ENCODE measurements at regions of chr17 and their contacts with region 1.

Region 1: GRCh38 chr17:7466639-7467341 is 12.6 kb downstream of the ZBTB4 start:
- DNase-seq: peak; percentile 87 to 90 (median 88)
- ATAC-seq: peak; percentile 43 to 69
- H3K4me3 ChIP-seq: no peak overlapping the region
- H3K27ac ChIP-seq: peak overlapping the region; percentile 83
- H3K4me1 ChIP-seq: peaks cover 10% of the 10 kb centered on the region
- H3K27me3 ChIP-seq: no peaks in the 10 kb centered on the region

Region 2: GRCh38 chr17:7383742-7384488 is 82.9 kb before region 1 on chr17:
- intact Hi-C with region 1: no loop called
- DNase-seq: peak; percentile 61 to 82 (median 81)
- ATAC-seq: peak; percentile 77 to 81
- H3K4me3 ChIP-seq: peak overlapping the region; percentile 16
- H3K27ac ChIP-seq: no peak overlapping the region
- H3K4me1 ChIP-seq: peaks cover 3% of the 10 kb centered on the region
- H3K27me3 ChIP-seq: no peaks in the 10 kb centered on the region

Region 3: DNA sequence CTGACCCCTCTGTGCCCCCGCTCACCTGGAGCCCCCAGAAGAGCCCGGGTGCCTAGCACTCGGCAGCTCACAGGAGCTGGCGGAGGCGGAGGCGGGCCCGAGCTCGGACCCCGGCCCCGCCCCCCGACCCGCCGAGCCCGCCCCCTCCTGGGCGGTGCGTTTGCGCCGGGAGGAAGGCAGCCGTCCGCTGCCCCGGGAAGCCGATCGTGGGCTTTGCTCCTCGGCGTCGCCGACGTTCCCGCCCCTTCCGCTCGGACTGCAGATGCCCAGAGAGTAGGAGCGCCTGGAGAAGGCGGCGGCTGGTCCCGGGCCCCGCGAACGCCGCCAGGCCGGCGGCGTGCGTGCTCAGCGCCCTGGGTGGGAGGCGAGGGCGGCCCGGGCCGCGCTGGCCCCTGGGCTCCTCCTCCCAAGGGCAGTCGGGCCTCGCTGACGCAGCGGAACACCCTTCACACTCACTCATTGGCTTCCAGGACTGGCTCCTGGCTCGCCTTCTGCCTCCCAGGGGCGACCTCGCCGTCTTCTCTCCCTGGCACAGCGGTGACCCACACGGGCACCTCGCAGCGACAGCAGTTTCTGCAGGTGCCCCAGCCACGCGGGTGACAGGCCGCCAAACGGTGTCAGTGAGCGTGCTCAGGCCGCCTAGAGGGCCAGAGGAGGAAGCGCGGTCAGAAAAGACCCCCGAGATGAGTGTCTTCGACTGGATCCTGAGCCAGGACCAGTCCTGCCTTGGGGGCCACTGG is 72.2 kb before region 1 on chr17 and contains the start of gene PLSCR3:
- intact Hi-C with region 1: no loop called
- DNase-seq: peak; percentile 91 to 97 (median 96)
- ATAC-seq: peak; percentile 93 to 95
- H3K4me3 ChIP-seq: peak within 1 kb of the TSS; percentile 92
- H3K27ac ChIP-seq: peak within 1 kb of the TSS; percentile 98
- H3K4me1 ChIP-seq: no peaks in the 10 kb centered on the region
- H3K27me3 ChIP-seq: no peaks in the 10 kb centered on the region
- total RNA-seq, gene PLSCR3: 19.8 to 25.0 (median 22.9) TPM

Region 4: GRCh38 chr17:7444682-7445618 is 21.8 kb before region 1 on chr17 and contains the start of gene CHRNB1:
- intact Hi-C with region 1: loop called in 1 of 4 experiments (anchors 2 kb)
- DNase-seq: peak; percentile 87 to 95 (median 94)
- ATAC-seq: peak; percentile 86 to 88
- H3K4me3 ChIP-seq: peak within 1 kb of the TSS; percentile 45
- H3K27ac ChIP-seq: peak within 1 kb of the TSS; percentile 5
- H3K4me1 ChIP-seq: no peaks in the 10 kb centered on the region
- H3K27me3 ChIP-seq: no peaks in the 10 kb centered on the region
- total RNA-seq, gene CHRNB1: 11.4 to 15.6 (median 13.1) TPM

Region 5: GRCh38 chr17:7515911-7516610 is 49.3 kb after region 1 on chr17:
- intact Hi-C with region 1: no loop called
- DNase-seq: no peak
- ATAC-seq: no peak
- H3K4me3 ChIP-seq: no peak overlapping the region
- H3K27ac ChIP-seq: no peak overlapping the region
- H3K4me1 ChIP-seq: no peaks in the 10 kb centered on the region
- H3K27me3 ChIP-seq: no peaks in the 10 kb centered on the region

Region 6: DNA sequence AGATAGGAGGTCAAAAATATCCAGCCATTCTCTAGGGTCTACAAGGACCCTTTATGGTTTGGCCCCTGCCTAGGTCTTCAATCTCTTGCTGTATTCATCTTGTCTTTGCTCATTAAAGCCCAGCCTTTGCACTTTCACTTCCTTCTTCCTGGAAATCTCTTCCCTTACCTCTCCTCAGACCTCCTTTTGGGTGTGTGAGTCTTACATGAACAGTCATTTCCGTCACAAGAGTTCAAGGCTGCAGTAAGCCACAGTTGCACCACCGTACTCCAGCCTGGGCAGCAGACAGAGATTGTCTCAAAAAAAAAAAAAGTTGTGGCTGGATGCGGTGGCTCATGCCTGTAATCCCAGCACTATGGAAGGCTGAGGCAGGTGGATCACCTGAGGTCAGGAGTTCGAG is 178.0 kb after region 1 on chr17:
- intact Hi-C with region 1: no loop called
- DNase-seq: no peak
- ATAC-seq: no peak
- H3K4me3 ChIP-seq: no peak overlapping the region
- H3K27ac ChIP-seq: no peak overlapping the region
- H3K4me1 ChIP-seq: no peaks in the 10 kb centered on the region
- H3K27me3 ChIP-seq: no peaks in the 10 kb centered on the region

Measured in right cardiac atrium (tissue), 5 donors.